ENCODE measurements at regions of chr3 and their contacts with region 1.

Region 1: GRCh38 chr3:128426128-128426921 is 40.4 kb downstream of the DNAJB8 start:
- DNase-seq: peak; percentile 48
- ATAC-seq: peak; percentile 87
- H3K4me3 Mint-ChIP-seq: no peak overlapping the region
- H3K27ac Mint-ChIP-seq: no peak overlapping the region
- H3K4me1 Mint-ChIP-seq: no peaks in the 10 kb centered on the region
- H3K27me3 Mint-ChIP-seq: peaks cover 16% of the 10 kb centered on the region

Region 2: DNA sequence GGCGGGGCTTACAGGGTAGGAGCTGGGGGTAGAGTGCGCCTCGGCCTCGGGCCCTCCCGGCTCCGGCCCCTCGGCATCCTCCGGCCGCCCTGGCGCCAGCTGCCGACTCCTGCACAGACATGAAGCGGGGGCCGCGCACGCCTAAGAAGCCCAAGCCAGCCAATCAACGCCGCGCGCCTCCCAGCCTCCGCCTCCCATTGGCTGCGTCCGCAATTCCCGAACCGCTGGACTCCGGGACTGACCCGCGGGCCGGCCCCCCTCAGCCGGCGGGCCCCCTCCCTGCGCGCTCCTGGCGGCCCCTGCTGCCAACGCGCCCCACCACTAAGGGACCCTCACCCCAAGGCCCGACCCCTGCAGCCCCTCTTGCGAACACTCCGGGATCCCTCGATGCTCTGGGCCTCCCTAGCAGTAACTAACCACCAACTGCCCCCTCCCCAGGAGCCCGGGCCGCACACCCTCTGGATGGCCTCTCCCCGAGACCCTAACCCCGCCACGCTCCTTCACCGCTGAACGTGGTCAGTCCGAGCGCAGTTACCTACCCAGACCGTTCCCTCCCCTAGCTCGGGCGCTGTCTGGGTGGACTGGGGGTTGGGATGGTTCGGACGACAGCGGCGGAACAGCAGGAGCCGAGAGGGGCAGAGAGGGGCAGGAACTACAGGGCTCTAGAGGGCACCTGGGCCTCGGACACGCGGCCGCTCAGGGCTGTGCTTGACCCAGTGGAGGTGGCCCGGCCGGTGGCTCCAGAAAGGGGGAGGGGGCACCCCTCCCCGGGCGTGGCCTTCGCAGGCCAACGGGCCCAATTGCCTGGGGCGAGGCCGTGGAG is 61.7 kb after region 1 on chr3:
- CTCF ChIA-PET with region 1: interaction called, 27 read pairs
- POLR2A ChIA-PET with region 1: no interaction called
- DNase-seq: no peak
- ATAC-seq: peak; percentile 21
- H3K4me3 Mint-ChIP-seq: no peak overlapping the region
- H3K27ac Mint-ChIP-seq: no peak overlapping the region
- H3K4me1 Mint-ChIP-seq: peaks cover 30% of the 10 kb centered on the region
- H3K27me3 Mint-ChIP-seq: peaks cover 79% of the 10 kb centered on the region

Region 3: GRCh38 chr3:128497387-128498126 is 71.2 kb after region 1 on chr3:
- CTCF ChIA-PET with region 1: interaction called, 45 read pairs
- POLR2A ChIA-PET with region 1: no interaction called
- DNase-seq: peak; percentile 71
- ATAC-seq: peak; percentile 72
- H3K4me3 Mint-ChIP-seq: peak overlapping the region; percentile 66
- H3K27ac Mint-ChIP-seq: no peak overlapping the region
- H3K4me1 Mint-ChIP-seq: peaks cover 4% of the 10 kb centered on the region
- H3K27me3 Mint-ChIP-seq: peaks cover 42% of the 10 kb centered on the region

Region 4: DNA sequence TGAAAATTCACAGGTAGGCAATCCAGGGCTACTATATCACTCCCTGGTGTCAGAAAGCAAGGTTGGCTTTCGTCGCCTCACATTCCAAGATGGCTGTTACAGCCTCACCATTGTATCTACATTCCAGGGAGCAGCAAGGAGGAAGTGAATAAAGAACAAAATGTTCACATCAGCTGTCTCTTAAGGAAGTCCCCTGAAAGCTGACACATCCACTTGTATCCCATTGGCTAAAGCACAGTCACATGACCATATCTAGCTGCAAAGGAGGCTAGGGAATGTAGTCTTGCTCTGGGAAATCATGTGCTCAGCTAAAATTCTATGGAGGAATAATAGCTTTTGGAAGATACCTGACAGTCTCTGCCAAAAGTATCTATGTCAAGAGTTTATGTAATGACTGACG is 79.4 kb after region 1 on chr3:
- CTCF ChIA-PET with region 1: interaction called, 12 read pairs
- POLR2A ChIA-PET with region 1: no interaction called
- DNase-seq: no peak
- ATAC-seq: no peak
- H3K4me3 Mint-ChIP-seq: no peak overlapping the region
- H3K27ac Mint-ChIP-seq: no peak overlapping the region
- H3K4me1 Mint-ChIP-seq: no peaks in the 10 kb centered on the region
- H3K27me3 Mint-ChIP-seq: peaks cover 2% of the 10 kb centered on the region

Region 5: GRCh38 chr3:128584412-128585020 is 158.2 kb after region 1 on chr3:
- CTCF ChIA-PET with region 1: interaction called, 12 read pairs
- POLR2A ChIA-PET with region 1: no interaction called
- DNase-seq: peak; percentile 56
- ATAC-seq: peak; percentile 92
- H3K4me3 Mint-ChIP-seq: no peak overlapping the region
- H3K27ac Mint-ChIP-seq: no peak overlapping the region
- H3K4me1 Mint-ChIP-seq: peaks cover 4% of the 10 kb centered on the region
- H3K27me3 Mint-ChIP-seq: peaks cover 11% of the 10 kb centered on the region

Region 6: DNA sequence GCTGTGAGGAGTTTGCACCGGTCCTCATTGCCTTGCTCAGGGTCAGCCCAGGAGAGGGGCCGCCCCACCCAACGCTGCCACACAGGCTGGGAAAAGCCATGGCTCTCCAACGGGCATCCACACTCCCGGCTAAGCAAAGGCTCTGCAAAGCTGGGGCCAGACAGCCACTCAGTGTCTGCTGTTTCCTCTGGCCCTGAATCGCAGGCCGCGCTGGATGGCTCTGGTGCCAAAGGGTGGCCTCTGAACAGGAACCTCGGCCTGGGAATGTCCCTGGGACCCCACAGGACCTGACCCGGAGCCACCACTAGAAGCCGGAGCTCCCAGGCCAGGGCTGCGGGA is 181.4 kb after region 1 on chr3:
- CTCF ChIA-PET with region 1: interaction called, 20 read pairs
- POLR2A ChIA-PET with region 1: no interaction called
- DNase-seq: no peak
- ATAC-seq: no peak
- H3K4me3 Mint-ChIP-seq: no peak overlapping the region
- H3K27ac Mint-ChIP-seq: no peak overlapping the region
- H3K4me1 Mint-ChIP-seq: no peaks in the 10 kb centered on the region
- H3K27me3 Mint-ChIP-seq: peaks cover 5% of the 10 kb centered on the region